Left lung (tissue), 14 donors: ENCODE measurements at regions of chr10 and their contacts with region 1.

Region 1: DNA sequence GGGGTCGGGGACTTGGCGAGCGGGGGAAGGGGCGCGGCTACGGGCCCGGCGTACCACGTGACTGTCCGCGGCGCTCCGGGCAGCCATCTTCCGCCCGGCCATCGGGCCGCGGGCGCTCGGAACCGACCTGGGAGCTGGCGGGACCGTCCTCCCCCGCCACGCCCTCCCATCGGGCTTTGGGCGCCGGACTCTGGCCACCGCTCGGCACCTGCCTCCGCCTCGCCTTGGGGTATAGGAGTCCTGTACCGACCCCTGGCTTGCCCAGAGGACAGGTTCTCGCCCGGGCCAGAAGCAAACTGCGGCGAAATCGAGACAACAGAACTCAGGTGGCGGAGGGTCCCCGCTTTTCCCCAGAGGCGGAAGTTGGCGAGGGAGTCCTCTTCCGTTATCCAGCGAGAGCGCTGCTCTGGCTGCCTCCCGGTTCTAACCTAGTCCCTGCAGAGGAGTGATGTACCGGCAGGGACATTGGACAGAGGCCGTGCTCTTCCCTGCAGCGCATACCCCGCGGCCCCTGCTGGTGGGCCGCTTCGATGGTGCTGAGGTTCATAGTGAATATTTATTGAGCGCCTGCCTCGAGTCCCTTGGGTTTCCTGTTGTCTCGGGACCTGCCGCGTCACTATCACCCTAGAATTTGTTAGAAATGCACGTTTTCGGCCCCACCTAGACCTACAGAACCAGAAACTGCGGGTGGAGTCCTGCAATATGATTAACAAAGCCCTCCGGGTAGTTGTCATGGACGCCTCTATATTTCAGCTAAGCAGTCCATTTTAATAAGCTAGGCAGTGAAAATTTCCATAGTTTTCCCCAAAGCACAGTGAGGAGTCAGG is 1.3 kb upstream of the SGMS1 start:
- DNase-seq: peak; percentile 74 to 96 (median 78)
- ATAC-seq: peak; percentile 75
- H3K4me3 ChIP-seq: peak overlapping the region; percentile 90 to 96
- H3K27ac ChIP-seq: peak overlapping the region; percentile 99
- H3K4me1 ChIP-seq: peaks cover 9 to 31% of the 10 kb centered on the region in 2 donors
- H3K27me3 ChIP-seq: no peaks in the 10 kb centered on the region
- CTCF ChIP-seq: peak; percentile 29 to 49

Region 2: DNA sequence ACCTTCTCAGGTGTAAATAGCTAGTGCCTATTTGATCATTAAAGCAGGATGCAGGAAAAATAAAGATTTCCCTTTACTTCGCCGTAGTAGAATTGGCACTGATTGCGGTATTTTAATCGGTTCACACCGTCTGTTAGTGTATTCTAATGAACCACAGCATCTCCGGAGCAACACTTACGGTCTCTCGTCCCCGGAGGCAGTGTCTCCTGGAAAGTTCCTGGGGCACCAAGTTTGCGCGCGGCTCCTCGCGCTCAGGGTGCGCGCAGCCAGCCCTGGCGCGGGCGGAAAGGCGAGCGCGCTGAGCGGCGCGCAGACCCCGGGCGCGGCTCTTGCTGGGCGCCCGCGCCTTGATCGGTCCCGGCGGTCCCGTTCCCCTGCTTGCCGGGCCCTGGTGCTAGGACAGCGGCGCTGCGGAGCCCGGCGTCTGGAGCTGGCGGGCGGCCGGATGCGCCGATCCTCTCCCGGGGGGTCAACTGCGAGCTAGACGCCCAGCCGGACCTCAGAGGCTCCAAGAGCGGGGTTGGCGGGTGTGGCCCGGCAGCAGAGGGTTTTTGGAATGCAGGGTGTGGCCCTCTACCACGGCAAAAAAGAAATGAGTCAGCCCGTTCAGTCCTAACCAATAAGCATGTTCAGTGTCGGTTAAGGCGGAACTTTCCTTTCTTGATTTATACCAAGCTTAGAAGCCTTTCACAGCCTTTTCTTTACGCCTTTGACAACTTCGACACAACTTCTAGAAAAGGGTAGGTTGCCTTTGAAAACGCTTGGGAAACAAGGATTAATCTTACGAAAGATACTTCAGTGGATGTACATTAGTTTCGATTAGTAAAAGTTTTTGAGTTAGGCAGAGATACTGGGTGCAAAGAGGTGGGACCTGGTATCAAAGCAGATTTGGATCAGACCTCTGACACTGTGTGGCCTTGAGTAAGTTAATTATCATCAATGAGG is 206.9 kb before region 1 on chr10:
- intact Hi-C with region 1: loop called in 1 of 2 experiments (anchors 5 kb)
- DNase-seq: peak; percentile 55 to 88 (median 73)
- ATAC-seq: peak; percentile 89
- H3K4me3 ChIP-seq: peak overlapping the region; percentile 54 to 61
- H3K27ac ChIP-seq: peak overlapping the region; percentile 81 to 92
- H3K4me1 ChIP-seq: peaks cover 23 to 74% of the 10 kb centered on the region in 2 donors
- H3K27me3 ChIP-seq: peaks cover 0 to 7% of the 10 kb centered on the region in 2 donors
- CTCF ChIP-seq: no peak

Region 3: GRCh38 chr10:50561816-50562215 is 63.3 kb before region 1 on chr10:
- intact Hi-C with region 1: loop called in 1 of 2 experiments (anchors 5 kb)
- DNase-seq: no peak
- ATAC-seq: peak; percentile 88
- H3K4me3 ChIP-seq: no peak overlapping the region
- H3K27ac ChIP-seq: no peak overlapping the region
- H3K4me1 ChIP-seq: peaks cover 10 to 12% of the 10 kb centered on the region in 2 donors
- H3K27me3 ChIP-seq: no peaks in the 10 kb centered on the region
- CTCF ChIP-seq: peak; percentile 40 to 47